BJ (cell line): ENCODE measurements at regions of chr1 and their contacts with region 1.

Region 1: DNA sequence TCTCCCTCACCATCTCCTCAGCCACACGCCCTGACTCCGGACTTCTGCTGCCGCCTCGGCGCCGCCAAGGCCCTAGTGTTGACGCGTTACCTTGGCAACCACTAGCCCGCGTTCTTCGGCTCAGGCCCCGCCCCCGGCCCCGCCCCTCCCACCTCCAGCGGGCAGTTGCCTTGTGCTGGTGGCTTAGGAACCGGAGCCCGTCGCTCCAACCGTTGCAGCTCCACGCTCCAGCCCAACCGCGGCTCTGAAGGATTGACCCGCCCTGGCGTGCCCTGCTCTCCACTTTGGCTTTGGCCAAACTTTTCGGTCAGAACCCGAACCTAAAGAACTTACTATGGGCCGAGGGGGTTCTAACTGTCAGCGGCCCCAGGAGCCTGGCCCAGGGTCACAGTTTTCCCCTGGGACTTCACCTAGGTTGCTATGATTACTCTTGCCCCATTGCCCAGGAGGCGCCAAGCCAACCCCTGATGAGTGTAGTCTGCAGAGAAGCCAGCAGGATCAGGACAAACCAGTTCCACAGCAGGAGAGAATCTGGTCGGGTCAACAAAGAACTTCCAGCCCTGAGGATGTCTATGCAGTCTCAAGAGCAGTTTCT is at the start of gene CFAP45:
- DNase-seq: no peak
- H3K4me3 ChIP-seq: no peak within 1 kb of the TSS
- H3K27me3 ChIP-seq: no peaks in the 10 kb centered on the region
- CTCF ChIP-seq: no peak
- polyA plus RNA-seq, gene CFAP45: 0.56 TPM in 2 replicates

Region 2: DNA sequence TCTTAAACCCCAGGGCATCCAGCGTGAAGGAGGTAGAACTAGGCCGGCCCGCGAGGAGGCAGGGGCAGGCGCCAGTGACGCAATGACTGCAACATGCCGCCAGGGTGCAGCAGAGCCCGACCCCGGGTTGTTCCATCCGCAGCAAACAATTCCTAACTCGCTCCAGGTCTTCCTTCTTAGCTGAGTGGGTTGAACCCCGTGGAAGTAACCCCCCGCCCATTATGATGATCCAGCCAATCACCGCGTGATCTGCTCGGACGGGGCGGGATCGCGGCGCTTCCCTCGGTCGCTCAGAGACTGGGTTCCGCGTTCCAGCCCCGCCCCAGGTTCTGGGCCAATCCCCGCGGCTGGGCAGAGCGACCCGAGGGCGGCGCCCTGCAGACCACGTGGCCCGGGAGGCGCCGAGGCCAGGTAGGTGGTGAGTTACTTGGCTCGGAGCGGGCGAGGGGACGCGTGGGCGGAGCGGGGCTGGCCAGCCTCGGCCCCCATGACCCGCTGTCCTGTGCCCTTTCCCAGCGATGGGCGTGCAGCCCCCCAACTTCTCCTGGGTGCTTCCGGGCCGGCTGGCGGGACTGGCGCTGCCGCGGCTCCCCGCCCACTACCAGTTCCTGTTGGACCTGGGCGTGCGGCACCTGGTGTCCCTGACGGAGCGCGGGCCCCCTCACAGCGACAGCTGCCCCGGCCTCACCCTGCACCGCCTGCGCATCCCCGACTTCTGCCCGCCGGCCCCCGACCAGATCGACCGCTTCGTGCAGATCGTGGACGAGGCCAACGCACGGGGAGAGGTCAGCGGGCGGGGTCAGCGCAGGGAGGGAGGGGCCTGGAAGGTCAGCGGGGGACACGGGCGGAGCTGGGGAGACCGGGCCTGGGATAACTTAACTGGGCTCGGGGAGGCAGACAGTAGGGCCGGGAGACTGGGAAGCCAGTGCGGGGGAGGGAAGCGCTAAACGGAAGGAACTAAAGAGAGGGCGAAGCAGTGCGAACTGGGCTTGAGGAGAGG is 119.3 kb before region 1 on chr1 and contains the start of gene DUSP23:
- CTCF ChIA-PET with region 1: interaction called, 11 read pairs
- POLR2A ChIA-PET with region 1: no interaction called
- DNase-seq: peak; percentile 94
- H3K4me3 ChIP-seq: peak within 1 kb of the TSS; percentile 90
- H3K27me3 ChIP-seq: peaks cover 2% of the 10 kb centered on the region
- CTCF ChIP-seq: peak; percentile 97
- polyA plus RNA-seq, gene DUSP23: 16.0 and 22.8 TPM in 2 replicates

Region 3: GRCh38 chr1:159869173-159869572 is 31.0 kb before region 1 on chr1:
- CTCF ChIA-PET with region 1: no interaction called
- POLR2A ChIA-PET with region 1: no interaction called
- DNase-seq: no peak
- H3K4me3 ChIP-seq: no peak overlapping the region
- H3K27me3 ChIP-seq: no peaks in the 10 kb centered on the region
- CTCF ChIP-seq: no peak

Region 4: DNA sequence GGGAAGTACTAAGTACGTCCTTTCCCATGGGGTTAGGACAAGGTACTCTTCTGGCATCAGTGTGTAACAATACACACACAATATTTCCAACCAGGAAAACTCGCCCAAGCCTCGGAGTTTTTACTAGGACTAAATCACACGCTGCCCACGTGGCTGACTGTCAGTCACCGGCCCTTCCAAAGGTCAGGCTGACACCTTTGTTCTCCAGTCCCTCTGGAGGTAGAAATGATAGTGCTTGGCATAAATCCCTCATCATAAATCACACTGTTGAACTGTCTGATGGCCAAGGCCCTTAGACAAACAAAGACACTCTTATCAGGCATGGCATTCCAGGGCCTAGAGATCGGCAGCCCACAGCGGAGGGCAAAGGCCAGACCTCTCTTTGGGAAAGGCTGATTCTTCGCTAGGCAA is 70.8 kb after region 1 on chr1:
- CTCF ChIA-PET with region 1: no interaction called
- POLR2A ChIA-PET with region 1: no interaction called
- DNase-seq: no peak
- H3K4me3 ChIP-seq: no peak overlapping the region
- H3K27me3 ChIP-seq: peaks cover 3% of the 10 kb centered on the region; the same call in 1 of the 2 replicates
- CTCF ChIP-seq: no peak